CD4-positive, alpha-beta memory T cell (primary cell): ENCODE measurements at regions of chr16 and their contacts with region 1.

Region 1: GRCh38 chr16:85610508-85611332 is 2.4 kb upstream of the GSE1 start:
- DNase-seq: peak; percentile 81 to 85 (median 84)
- H3K4me3 ChIP-seq: peak overlapping the region; percentile 37 to 47
- H3K4me3 Mint-ChIP-seq: peak overlapping the region; percentile 84 to 96 (median 86)
- H3K27ac ChIP-seq: no peak overlapping the region
- H3K27ac Mint-ChIP-seq: peak overlapping the region; percentile 78 to 92 (median 89)
- H3K4me1 ChIP-seq: peaks cover 32% of the 10 kb centered on the region
- H3K4me1 Mint-ChIP-seq: peaks cover 3 to 45% (median 16%) of the 10 kb centered on the region in 4 donors
- H3K27me3 ChIP-seq: no peaks in the 10 kb centered on the region
- H3K27me3 Mint-ChIP-seq: no peaks in the 10 kb centered on the region

Region 2: GRCh38 chr16:85305996-85306792 is 304.5 kb before region 1 on chr16:
- CTCF ChIA-PET with region 1: interaction called, 3 read pairs
- POLR2A ChIA-PET with region 1: no interaction called
- intact Hi-C with region 1: loop called (anchors 1 kb)
- DNase-seq: peak; percentile 58 to 75 (median 62)
- H3K4me3 ChIP-seq: no peak overlapping the region
- H3K4me3 Mint-ChIP-seq: peak overlapping the region; percentile 31 to 62 (median 51)
- H3K27ac ChIP-seq: no peak overlapping the region
- H3K27ac Mint-ChIP-seq: peak overlapping the region; percentile 24 to 87 (median 69)
- H3K4me1 ChIP-seq: peaks cover 47% of the 10 kb centered on the region
- H3K4me1 Mint-ChIP-seq: peaks cover 12 to 48% (median 18%) of the 10 kb centered on the region in 4 donors
- H3K27me3 ChIP-seq: no peaks in the 10 kb centered on the region
- H3K27me3 Mint-ChIP-seq: peaks cover 0 to 11% of the 10 kb centered on the region in 2 donors

Region 3: GRCh38 chr16:85393674-85394483 is 216.8 kb before region 1 on chr16:
- CTCF ChIA-PET with region 1: interaction called, 9 read pairs
- POLR2A ChIA-PET with region 1: no interaction called
- intact Hi-C with region 1: loop called (anchors 1 kb)
- DNase-seq: peak; percentile 40 to 55 (median 50)
- H3K4me3 ChIP-seq: no peak overlapping the region
- H3K4me3 Mint-ChIP-seq: no peak overlapping the region
- H3K27ac ChIP-seq: no peak overlapping the region
- H3K27ac Mint-ChIP-seq: no peak overlapping the region
- H3K4me1 ChIP-seq: no peaks in the 10 kb centered on the region
- H3K4me1 Mint-ChIP-seq: no peaks in the 10 kb centered on the region
- H3K27me3 ChIP-seq: no peaks in the 10 kb centered on the region
- H3K27me3 Mint-ChIP-seq: peaks cover 0 to 2% of the 10 kb centered on the region in 2 donors

Region 4: DNA sequence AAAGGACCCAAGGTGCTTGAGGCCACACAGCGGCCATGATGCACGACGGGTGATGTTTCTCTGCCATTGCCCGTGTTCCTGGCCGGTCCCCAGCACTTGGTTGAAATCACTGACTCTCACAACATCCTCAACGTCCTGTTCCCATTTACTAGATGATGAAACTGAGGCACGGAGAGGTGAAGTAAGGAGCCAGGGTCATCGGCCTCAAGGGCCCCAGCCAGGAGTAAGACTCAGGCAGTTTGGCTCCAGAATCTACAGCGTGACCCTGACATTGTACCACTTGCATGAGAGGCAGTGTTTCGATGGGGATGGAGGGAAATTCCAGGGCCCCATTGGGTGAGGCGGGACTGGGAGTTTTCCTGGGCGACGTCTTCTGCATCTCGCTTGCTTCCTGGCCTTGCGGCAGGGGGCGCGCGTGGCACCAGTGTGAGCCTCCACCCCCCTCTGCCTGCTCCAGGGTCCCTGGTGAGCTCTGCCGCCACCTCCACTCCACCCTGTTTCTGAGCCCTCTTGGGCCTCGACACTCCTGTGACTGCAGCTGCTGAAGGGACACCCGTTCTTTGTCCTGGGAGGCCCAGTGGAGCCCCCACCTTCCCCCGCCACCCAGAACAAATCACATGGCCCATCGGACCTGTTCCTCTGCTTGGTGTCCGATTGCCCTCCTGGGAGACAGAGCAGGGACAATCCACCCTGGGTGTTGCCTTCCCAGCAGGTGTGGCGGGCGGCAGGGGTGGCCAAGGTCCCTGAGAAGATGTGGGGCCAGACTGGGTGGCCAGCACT is 130.6 kb before region 1 on chr16:
- CTCF ChIA-PET with region 1: interaction called, 14 read pairs
- POLR2A ChIA-PET with region 1: no interaction called
- intact Hi-C with region 1: loop called (anchors 1 kb)
- DNase-seq: peak in 2 of 5 donors; percentile 4 to 13
- H3K4me3 ChIP-seq: no peak overlapping the region
- H3K4me3 Mint-ChIP-seq: peak overlapping the region in 1 of 8 donors; percentile 48
- H3K27ac ChIP-seq: no peak overlapping the region
- H3K27ac Mint-ChIP-seq: no peak overlapping the region
- H3K4me1 ChIP-seq: no peaks in the 10 kb centered on the region
- H3K4me1 Mint-ChIP-seq: no peaks in the 10 kb centered on the region
- H3K27me3 ChIP-seq: no peaks in the 10 kb centered on the region
- H3K27me3 Mint-ChIP-seq: no peaks in the 10 kb centered on the region

Region 5: DNA sequence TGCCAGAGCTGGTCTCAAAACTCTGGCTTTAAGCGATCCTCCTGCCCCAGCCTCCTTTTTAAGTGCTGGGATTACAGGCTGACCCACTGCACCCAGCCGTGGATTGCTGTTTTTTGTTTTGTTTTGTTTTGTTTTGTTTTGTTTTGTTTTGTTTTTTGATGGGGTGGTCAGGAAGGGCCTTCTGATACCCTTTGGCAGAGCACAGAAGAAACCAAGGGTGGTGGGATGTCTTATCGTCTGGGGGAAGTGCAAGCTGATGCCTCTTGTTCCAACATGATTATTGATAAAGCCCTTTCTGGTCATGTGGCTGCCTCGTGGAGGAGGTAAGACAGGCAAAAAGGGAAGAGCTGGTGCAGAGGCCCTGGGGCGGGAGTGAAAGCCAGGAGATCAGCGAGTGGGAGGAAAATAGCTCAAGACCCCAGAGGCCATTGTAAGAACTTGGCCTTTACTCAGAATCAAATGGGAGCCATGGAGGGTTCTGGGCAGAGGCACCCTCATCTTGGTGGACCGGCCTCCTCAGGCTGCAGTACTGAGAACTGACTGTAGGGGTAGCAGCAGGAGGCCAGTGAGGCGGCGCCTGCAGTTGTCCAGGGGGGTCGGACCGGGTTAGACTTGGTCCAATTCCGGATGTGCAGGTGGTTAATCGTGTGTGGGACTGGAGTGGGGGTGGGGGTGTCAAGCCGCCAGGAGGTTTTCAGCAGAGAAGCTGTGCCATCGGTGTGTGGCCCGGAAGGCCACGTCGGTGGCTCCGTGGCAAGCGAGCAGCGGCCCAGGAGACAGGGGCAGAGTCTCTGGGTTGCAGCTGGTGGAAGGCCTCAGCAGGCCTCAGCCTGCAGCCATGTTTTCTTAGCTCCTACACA is 82.0 kb before region 1 on chr16:
- CTCF ChIA-PET with region 1: interaction called, 14 read pairs
- POLR2A ChIA-PET with region 1: no interaction called
- intact Hi-C with region 1: no loop called
- DNase-seq: peak in 1 of 5 donors; percentile 15
- H3K4me3 ChIP-seq: no peak overlapping the region
- H3K4me3 Mint-ChIP-seq: no peak overlapping the region
- H3K27ac ChIP-seq: no peak overlapping the region
- H3K27ac Mint-ChIP-seq: peak overlapping the region in 1 of 7 donors; percentile 61
- H3K4me1 ChIP-seq: no peaks in the 10 kb centered on the region
- H3K4me1 Mint-ChIP-seq: no peaks in the 10 kb centered on the region
- H3K27me3 ChIP-seq: no peaks in the 10 kb centered on the region
- H3K27me3 Mint-ChIP-seq: no peaks in the 10 kb centered on the region